ENCODE measurements at regions of chr10 and their contacts with region 1.

Region 1: GRCh38 chr10:101467286-101467770 is 113.4 kb downstream of the BTRC start:
- DNase-seq: no peak
- ATAC-seq: peak; percentile 81
- H3K4me3 Mint-ChIP-seq: no peak overlapping the region
- H3K27ac Mint-ChIP-seq: no peak overlapping the region
- H3K4me1 Mint-ChIP-seq: peaks cover 28% of the 10 kb centered on the region
- H3K27me3 Mint-ChIP-seq: no peaks in the 10 kb centered on the region
- CTCF ChIP-seq: peak; percentile 61

Region 2: DNA sequence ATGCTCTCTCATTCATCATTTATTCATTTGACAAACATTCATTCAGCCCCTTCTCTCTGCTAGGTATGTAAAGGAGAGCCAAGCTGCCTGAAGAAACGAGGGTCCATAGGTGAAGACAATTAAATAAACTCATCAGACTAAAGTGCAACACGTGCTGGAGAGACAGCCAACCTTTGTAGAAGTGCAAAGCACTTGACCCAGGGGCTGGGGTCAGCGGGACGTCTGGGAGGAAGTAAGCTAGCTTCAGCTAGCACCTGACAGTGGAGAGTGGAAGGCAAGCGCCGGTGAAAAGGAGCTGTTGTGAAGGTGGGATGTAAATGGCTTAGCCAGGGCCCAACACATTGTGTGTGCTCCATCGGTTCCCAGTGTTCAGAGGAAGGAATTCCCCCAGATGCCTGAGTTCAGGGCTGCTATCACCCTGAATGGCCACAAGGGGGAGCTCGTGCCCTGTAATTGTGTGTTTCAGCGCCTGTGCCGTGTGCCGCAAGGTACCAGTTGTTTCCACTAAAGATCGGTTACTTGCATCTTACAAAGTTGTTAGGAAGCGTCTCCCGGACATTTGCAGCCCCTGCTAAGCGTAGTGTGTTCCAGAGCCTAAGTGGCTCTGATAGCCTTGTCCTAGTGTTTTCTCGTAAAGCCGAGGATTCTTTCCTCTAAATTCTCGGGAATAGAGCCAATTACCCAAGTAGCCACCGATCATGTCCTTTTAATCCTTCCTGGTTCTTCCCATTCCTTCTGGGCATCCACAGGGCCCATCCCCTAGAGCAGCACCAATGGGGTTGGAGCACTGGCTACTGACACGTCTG is 305.6 kb before region 1 on chr10:
- CTCF ChIA-PET with region 1: interaction called, 11 read pairs
- POLR2A ChIA-PET with region 1: no interaction called
- DNase-seq: peak; percentile 83
- ATAC-seq: peak; percentile 96
- H3K4me3 Mint-ChIP-seq: peak overlapping the region; percentile 55
- H3K27ac Mint-ChIP-seq: no peak overlapping the region; the same call in 1 of the 2 replicates
- H3K4me1 Mint-ChIP-seq: peaks cover 37% of the 10 kb centered on the region
- H3K27me3 Mint-ChIP-seq: peaks cover 52% of the 10 kb centered on the region
- CTCF ChIP-seq: peak; percentile 97

Region 3: GRCh38 chr10:101176577-101176976 is 290.8 kb before region 1 on chr10:
- CTCF ChIA-PET with region 1: no interaction called
- POLR2A ChIA-PET with region 1: no interaction called
- DNase-seq: no peak
- ATAC-seq: no peak
- H3K4me3 Mint-ChIP-seq: no peak overlapping the region
- H3K27ac Mint-ChIP-seq: no peak overlapping the region
- H3K4me1 Mint-ChIP-seq: no peaks in the 10 kb centered on the region
- H3K27me3 Mint-ChIP-seq: peaks cover 4% of the 10 kb centered on the region
- CTCF ChIP-seq: no peak

Region 4: GRCh38 chr10:101297901-101298486 is 169.3 kb before region 1 on chr10:
- CTCF ChIA-PET with region 1: interaction called, 64 read pairs
- POLR2A ChIA-PET with region 1: interaction called, 6 read pairs
- DNase-seq: peak; percentile 92
- ATAC-seq: peak; percentile 81
- H3K4me3 Mint-ChIP-seq: no peak overlapping the region
- H3K27ac Mint-ChIP-seq: no peak overlapping the region
- H3K4me1 Mint-ChIP-seq: peaks cover 10% of the 10 kb centered on the region
- H3K27me3 Mint-ChIP-seq: peaks cover 69% of the 10 kb centered on the region
- CTCF ChIP-seq: peak; percentile 86

Region 5: GRCh38 chr10:101346177-101346576 is 121.2 kb before region 1 on chr10:
- CTCF ChIA-PET with region 1: no interaction called
- POLR2A ChIA-PET with region 1: no interaction called
- DNase-seq: no peak
- ATAC-seq: no peak
- H3K4me3 Mint-ChIP-seq: no peak overlapping the region
- H3K27ac Mint-ChIP-seq: no peak overlapping the region
- H3K4me1 Mint-ChIP-seq: no peaks in the 10 kb centered on the region
- H3K27me3 Mint-ChIP-seq: peaks cover 13% of the 10 kb centered on the region
- CTCF ChIP-seq: no peak

Region 6: DNA sequence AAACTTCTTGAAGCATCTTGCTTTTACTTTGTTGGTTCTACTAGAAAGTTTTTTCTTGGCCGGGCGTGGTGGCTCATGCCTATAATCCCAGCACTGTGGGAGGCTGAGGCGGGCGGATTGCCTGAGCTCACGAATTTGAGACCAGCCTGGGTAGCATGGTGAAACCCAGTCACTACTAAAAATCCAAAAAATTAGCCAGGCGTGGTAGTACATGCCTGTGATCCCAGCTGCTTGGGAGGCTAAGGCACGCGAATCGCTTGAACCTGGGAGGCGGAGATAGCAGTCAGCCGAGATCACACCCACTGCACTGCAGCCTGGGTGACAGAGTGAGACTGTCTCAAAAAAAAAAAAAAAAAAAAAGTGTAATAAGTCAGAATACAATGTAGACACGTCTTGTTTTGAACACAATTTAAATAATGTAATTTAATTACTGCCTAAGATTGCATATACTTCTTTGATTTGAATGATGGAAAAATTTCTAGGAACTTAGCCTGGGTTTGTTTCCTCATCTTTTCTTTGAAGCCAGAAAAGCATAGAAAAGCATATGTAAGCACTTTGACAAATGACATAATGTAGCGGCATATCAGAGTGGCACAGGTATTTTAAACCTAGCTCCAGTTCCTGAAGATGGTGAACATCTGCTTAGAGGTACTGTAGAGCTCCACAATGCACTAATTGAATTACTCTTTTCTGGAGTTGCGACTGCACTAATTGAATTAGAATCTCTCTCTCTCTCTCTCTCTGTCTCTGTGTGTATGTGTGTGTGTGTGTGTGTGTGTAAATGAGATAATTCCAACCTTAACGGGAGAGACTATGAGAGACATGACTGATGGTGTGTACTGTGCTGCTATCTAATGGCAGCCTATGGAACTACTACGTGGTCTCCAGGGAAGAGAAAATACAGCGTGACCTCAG is 25.5 kb before region 1 on chr10:
- CTCF ChIA-PET with region 1: interaction called, 37 read pairs
- POLR2A ChIA-PET with region 1: no interaction called
- DNase-seq: peak; percentile 17
- ATAC-seq: peak; percentile 98
- H3K4me3 Mint-ChIP-seq: no peak overlapping the region
- H3K27ac Mint-ChIP-seq: no peak overlapping the region
- H3K4me1 Mint-ChIP-seq: peaks cover 19% of the 10 kb centered on the region
- H3K27me3 Mint-ChIP-seq: no peaks in the 10 kb centered on the region
- CTCF ChIP-seq: no peak

Region 7: GRCh38 chr10:101485681-101486554 is 18.6 kb after region 1 on chr10:
- CTCF ChIA-PET with region 1: interaction called, 47 read pairs
- POLR2A ChIA-PET with region 1: no interaction called
- DNase-seq: no peak
- ATAC-seq: peak; percentile 71
- H3K4me3 Mint-ChIP-seq: peak overlapping the region; percentile 63
- H3K27ac Mint-ChIP-seq: peak overlapping the region; percentile 92
- H3K4me1 Mint-ChIP-seq: peaks cover 59% of the 10 kb centered on the region
- H3K27me3 Mint-ChIP-seq: no peaks in the 10 kb centered on the region
- CTCF ChIP-seq: no peak

Region 8: DNA sequence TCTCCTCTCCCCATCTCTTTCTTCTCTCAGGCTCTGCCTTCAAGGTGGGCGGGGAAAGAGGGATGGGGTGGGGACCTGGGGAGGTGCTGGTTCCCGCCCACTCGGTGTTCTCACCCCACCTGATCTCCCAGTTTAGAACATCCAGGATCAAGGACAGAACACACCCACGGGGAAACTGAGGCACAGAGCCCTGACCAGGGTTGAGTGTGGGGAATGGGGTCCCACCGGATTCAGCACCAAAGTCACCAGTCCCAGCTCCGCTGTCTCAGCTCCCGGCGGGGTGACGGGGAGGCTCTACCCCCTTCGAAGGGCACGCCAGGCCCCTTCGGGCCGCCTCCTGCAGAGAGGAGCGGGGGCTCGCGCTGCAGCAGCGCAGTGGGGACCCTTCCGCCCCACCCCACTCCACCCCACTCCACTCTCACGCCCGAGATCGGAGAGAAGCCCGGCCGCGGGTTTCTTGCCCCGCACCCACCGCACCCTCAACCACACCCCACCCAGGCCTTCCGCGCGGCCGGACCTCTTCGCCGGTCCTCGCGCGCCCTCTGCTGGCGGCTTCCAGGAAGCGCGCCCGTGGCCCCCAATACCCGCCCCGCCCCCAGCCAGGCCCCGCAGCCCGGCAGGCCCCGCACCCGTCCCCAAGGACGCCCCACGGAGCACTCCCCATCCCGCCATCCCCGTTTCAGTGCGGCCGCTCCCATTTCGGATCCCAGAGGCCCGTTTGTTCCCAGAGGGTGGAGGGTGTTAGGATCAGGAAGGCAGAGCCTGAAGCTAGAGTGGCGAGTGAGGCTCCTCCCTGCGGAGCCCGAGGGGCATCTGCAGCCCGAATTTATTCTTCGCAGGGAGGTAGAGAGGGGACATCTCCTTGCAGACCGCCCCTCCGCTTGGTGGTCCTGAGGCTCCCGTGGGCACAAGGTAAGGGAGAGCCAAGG is 102.8 kb after region 1 on chr10:
- CTCF ChIA-PET with region 1: interaction called, 21 read pairs
- POLR2A ChIA-PET with region 1: no interaction called
- DNase-seq: peak; percentile 82
- ATAC-seq: peak; percentile 55
- H3K4me3 Mint-ChIP-seq: peak overlapping the region; percentile 79
- H3K27ac Mint-ChIP-seq: no peak overlapping the region
- H3K4me1 Mint-ChIP-seq: peaks cover 36% of the 10 kb centered on the region
- H3K27me3 Mint-ChIP-seq: peaks cover 78% of the 10 kb centered on the region
- CTCF ChIP-seq: peak; percentile 95

Measured in WTC11 (cell line).